Sigmoid colon (tissue), 7 donors: ENCODE measurements at regions of chr18 and their contacts with region 1.

Region 1: DNA sequence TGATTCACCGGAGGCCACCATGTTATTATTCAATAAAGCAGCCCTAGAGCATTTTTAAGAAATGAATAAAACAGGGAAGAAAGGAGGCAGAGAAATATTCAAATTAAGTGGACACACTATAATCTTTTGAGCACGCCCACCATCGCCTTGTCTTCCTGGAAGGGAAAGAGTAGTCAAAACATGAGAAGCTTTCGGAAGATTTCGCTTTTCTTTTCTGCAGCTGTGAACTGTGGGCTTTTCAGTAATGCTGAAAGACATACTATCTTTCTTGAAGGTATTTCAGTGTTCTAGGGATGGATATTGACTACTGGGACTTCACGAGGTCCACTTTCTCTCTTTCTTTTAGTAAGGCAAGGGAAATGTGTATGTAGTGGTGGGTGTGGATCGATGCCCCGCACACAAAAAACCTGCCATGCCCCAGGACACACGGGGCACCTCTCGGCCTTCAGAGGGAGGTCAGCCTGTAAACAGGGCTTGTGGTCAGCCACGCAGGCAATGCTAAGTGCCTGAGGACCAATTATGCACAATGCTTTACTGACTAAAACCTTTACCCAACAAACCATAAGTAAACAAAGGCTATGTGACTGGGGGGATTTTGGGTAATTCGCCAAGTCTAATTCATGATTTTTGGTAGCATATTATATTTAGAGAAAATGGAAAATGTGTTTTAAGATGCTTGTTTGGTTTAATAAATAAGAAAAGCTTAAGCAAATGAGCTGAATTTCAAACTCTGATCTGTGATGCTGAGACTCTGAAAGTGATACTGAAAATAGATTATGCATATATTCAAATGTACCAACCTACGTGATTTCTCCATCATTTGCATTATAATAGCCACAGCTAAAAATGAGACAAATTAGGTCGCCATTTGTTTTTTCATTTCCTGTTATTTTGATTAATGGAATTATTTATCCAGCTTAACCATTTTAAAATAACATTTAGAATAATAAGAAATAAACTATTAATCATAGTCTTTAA is 130.5 kb downstream of the ZNF516 start:
- DNase-seq: no peak
- H3K4me3 ChIP-seq: no peak overlapping the region
- H3K27ac ChIP-seq: peak overlapping the region in 3 of 4 donors; percentile 55 to 78 (median 61)
- H3K4me1 ChIP-seq: peaks cover 0 to 40% (median 17%) of the 10 kb centered on the region in 4 donors
- H3K27me3 ChIP-seq: no peaks in the 10 kb centered on the region
- CTCF ChIP-seq: no peak
- EP300 ChIP-seq: no peak
- POLR2A ChIP-seq: no peak

Region 2: GRCh38 chr18:74645679-74646078 is 1718.9 kb before region 1 on chr18:
- intact Hi-C with region 1: loop called (anchors 5 kb)
- DNase-seq: no peak
- H3K4me3 ChIP-seq: no peak overlapping the region
- H3K27ac ChIP-seq: no peak overlapping the region
- H3K4me1 ChIP-seq: peaks cover 0 to 42% (median 3%) of the 10 kb centered on the region in 4 donors
- H3K27me3 ChIP-seq: no peaks in the 10 kb centered on the region
- CTCF ChIP-seq: no peak
- EP300 ChIP-seq: no peak
- POLR2A ChIP-seq: no peak